ENCODE measurements at regions of chr2 and their contacts with region 1.

Region 1: GRCh38 chr2:118699447-118700215 is 147.8 kb downstream of the EN1 start:
- DNase-seq: no peak
- ATAC-seq: no peak
- H3K4me3 ChIP-seq: no peak overlapping the region
- H3K27ac ChIP-seq: no peak overlapping the region
- H3K4me1 ChIP-seq: no peaks in the 10 kb centered on the region
- H3K27me3 ChIP-seq: no peaks in the 10 kb centered on the region
- CTCF ChIP-seq: no peak
- POLR2A ChIP-seq: no peak

Region 2: GRCh38 chr2:118509319-118510004 is 190.2 kb before region 1 on chr2:
- intact Hi-C with region 1: no loop called
- DNase-seq: no peak
- ATAC-seq: no peak
- H3K4me3 ChIP-seq: no peak overlapping the region
- H3K27ac ChIP-seq: no peak overlapping the region
- H3K4me1 ChIP-seq: no peaks in the 10 kb centered on the region
- H3K27me3 ChIP-seq: no peaks in the 10 kb centered on the region
- CTCF ChIP-seq: no peak
- POLR2A ChIP-seq: no peak

Region 3: GRCh38 chr2:118726821-118727220 is 27.2 kb after region 1 on chr2:
- intact Hi-C with region 1: loop called in 1 of 10 experiments (anchors 2 kb)
- DNase-seq: no peak
- ATAC-seq: no peak
- H3K4me3 ChIP-seq: no peak overlapping the region
- H3K27ac ChIP-seq: no peak overlapping the region
- H3K4me1 ChIP-seq: no peaks in the 10 kb centered on the region
- H3K27me3 ChIP-seq: no peaks in the 10 kb centered on the region
- CTCF ChIP-seq: no peak
- POLR2A ChIP-seq: no peak